ENCODE measurements at regions of chr13 and their contacts with region 1.

Region 1: GRCh38 chr13:109764470-109765291 is 21.7 kb downstream of the IRS2 start:
- DNase-seq: peak; percentile 59
- H3K4me3 ChIP-seq: no peak overlapping the region
- H3K27ac ChIP-seq: no peak overlapping the region
- H3K4me1 ChIP-seq: peaks cover 45% of the 10 kb centered on the region
- H3K27me3 ChIP-seq: no peaks in the 10 kb centered on the region
- CTCF ChIP-seq: peak; percentile 25 to 37

Region 2: GRCh38 chr13:109728791-109729731 is 35.6 kb before region 1 on chr13:
- CTCF ChIA-PET with region 1: no interaction called
- dilution Hi-C with region 1: loop called (anchors 5 kb)
- in situ Hi-C with region 1: no loop called
- intact Hi-C with region 1: no loop called
- DNase-seq: peak; percentile 63
- H3K4me3 ChIP-seq: no peak overlapping the region
- H3K27ac ChIP-seq: no peak overlapping the region
- H3K4me1 ChIP-seq: peaks cover 13% of the 10 kb centered on the region
- H3K27me3 ChIP-seq: no peaks in the 10 kb centered on the region
- CTCF ChIP-seq: no peak